Activated T-helper 1 cell treated with anti-CD3 and anti-CD28 coated beads, Interleukin-12 subunit alpha, Interleukin-12 subunit beta, Interleukin-2, Interleukin-4 antibody, amounts not matched to agents 30 ng/mL and 10 ng/mL and 1 ng/mL, durations not matched to agents 14 hours and 24 hours and 36 hours (primary cell): ENCODE measurements at regions of chr2 and their contacts with region 1.

Region 1: GRCh38 chr2:121810959-121811853 is 55.8 kb downstream of the TSN start:
- DNase-seq: no peak
- H3K4me3 Mint-ChIP-seq: no peak overlapping the region
- H3K27ac Mint-ChIP-seq: no peak overlapping the region
- H3K4me1 Mint-ChIP-seq: no peaks in the 10 kb centered on the region
- H3K27me3 Mint-ChIP-seq: peaks cover 7% of the 10 kb centered on the region

Region 2: DNA sequence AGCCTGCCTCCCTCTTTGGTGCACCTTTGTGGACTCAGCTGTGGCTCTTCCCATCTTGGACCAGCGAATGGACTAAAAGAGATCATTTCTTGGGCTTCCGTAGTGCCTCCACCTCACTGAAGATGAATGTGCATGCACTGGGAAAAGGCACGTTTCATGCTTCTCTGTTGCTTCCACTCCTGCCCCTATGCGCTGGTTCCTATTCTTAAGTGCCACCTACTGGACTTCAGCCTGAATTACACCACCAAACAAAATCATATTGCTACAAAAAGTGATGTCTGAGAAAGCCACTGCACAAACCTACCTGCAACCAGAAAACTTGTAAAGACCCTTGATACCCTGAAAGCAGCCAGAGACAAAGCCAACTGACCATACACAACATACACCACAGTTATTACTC is 639.8 kb after region 1 on chr2:
- intact Hi-C with region 1: loop called (anchors 5 kb)
- DNase-seq: no peak
- H3K4me3 Mint-ChIP-seq: no peak overlapping the region
- H3K27ac Mint-ChIP-seq: no peak overlapping the region
- H3K4me1 Mint-ChIP-seq: no peaks in the 10 kb centered on the region
- H3K27me3 Mint-ChIP-seq: no peaks in the 10 kb centered on the region

Region 3: GRCh38 chr2:122886479-122887145 is 1075.4 kb after region 1 on chr2:
- intact Hi-C with region 1: no loop called
- DNase-seq: no peak
- H3K4me3 Mint-ChIP-seq: no peak overlapping the region
- H3K27ac Mint-ChIP-seq: no peak overlapping the region
- H3K4me1 Mint-ChIP-seq: no peaks in the 10 kb centered on the region
- H3K27me3 Mint-ChIP-seq: no peaks in the 10 kb centered on the region